ENCODE measurements at regions of chr16 and their contacts with region 1.

Region 1: DNA sequence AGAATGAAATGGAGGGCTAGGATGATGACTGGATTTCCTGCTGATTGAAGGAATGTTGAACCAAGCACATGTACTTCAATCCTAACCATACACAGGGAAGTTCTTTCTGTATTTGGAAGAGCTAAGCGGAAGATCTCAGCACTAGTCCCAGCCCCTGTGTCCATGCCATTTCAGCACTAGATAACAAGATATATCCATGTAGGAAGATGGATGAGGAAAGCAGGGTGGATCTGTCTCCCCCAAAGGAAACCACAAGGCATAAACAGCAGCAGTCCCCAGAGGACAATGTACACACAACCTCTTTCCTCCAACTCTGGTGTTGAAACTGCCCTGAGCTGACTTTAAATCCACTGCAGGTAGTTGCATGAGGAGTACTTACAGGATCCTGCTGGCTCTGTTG is 75.1 kb downstream of the GRIN2A start:
- DNase-seq: no peak
- H3K4me3 ChIP-seq: no peak overlapping the region
- H3K27ac ChIP-seq: no peak overlapping the region
- H3K4me1 ChIP-seq: no peaks in the 10 kb centered on the region
- H3K27me3 ChIP-seq: no peaks in the 10 kb centered on the region
- CTCF ChIP-seq: no peak

Region 2: GRCh38 chr16:10085078-10085798 is 21.8 kb before region 1 on chr16:
- CTCF ChIA-PET with region 1: interaction called, 10 read pairs
- dilution Hi-C with region 1: no loop called
- in situ Hi-C with region 1: no loop called
- intact Hi-C with region 1: no loop called
- DNase-seq: no peak
- H3K4me3 ChIP-seq: no peak overlapping the region
- H3K27ac ChIP-seq: no peak overlapping the region
- H3K4me1 ChIP-seq: peaks cover 10% of the 10 kb centered on the region
- H3K27me3 ChIP-seq: no peaks in the 10 kb centered on the region
- CTCF ChIP-seq: no peak

Measured in mammary epithelial cell (primary cell).